Cardiac septum (tissue), 1 donor: ENCODE measurements at regions of chr18 and their contacts with region 1.

Region 1: GRCh38 chr18:36015629-36016028 is 43.1 kb downstream of the RMP24 start:
- DNase-seq: no peak

Region 2: GRCh38 chr18:35502052-35502451 is 513.6 kb before region 1 on chr18:
- intact Hi-C with region 1: no loop called
- DNase-seq: no peak

Region 3: DNA sequence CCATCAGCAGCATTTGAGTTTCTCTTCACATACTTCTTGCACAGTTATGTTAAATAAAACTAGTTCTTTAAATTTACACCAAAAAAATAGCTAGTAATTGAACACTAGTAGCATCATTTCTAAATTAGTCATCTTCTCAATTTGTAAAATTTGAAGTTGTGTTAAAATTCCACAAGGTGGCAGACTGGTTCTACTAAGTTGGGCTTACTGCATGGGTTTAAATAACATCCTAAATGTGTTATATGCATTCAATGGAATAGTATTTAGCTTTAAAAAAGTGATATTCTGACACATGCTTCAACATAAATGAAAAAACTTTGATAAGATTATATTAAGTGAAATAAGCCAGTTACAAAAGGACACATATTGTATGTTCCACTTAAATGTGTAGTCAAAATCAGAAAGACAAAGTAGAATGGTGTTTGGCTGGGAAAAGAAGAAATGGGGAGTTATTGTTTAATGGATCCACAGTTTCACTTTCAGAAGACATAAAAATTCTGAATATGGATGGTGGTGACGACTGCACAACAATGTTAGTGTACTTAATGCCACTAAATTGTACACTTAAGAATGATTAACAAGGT is 80.4 kb after region 1 on chr18:
- intact Hi-C with region 1: loop called (anchors 5 kb)
- DNase-seq: no peak

Region 4: GRCh38 chr18:36265015-36265414 is 249.4 kb after region 1 on chr18:
- intact Hi-C with region 1: loop called (anchors 5 kb)
- DNase-seq: no peak